Spleen (tissue), 13 donors: ENCODE measurements at regions of chr6 and their contacts with region 1.

Region 1: GRCh38 chr6:117449549-117450439 is 24.1 kb upstream of the ROS1 start:
- DNase-seq: no peak
- H3K4me3 ChIP-seq: no peak overlapping the region
- H3K27ac ChIP-seq: no peak overlapping the region
- H3K4me1 ChIP-seq: peaks cover 0 to 8% (median 3%) of the 10 kb centered on the region in 6 donors
- H3K27me3 ChIP-seq: peaks cover 0 to 44% (median 0%) of the 10 kb centered on the region in 7 donors
- CTCF ChIP-seq: peak; percentile 30 to 81 (median 69)
- POLR2A ChIP-seq: no peak

Region 2: DNA sequence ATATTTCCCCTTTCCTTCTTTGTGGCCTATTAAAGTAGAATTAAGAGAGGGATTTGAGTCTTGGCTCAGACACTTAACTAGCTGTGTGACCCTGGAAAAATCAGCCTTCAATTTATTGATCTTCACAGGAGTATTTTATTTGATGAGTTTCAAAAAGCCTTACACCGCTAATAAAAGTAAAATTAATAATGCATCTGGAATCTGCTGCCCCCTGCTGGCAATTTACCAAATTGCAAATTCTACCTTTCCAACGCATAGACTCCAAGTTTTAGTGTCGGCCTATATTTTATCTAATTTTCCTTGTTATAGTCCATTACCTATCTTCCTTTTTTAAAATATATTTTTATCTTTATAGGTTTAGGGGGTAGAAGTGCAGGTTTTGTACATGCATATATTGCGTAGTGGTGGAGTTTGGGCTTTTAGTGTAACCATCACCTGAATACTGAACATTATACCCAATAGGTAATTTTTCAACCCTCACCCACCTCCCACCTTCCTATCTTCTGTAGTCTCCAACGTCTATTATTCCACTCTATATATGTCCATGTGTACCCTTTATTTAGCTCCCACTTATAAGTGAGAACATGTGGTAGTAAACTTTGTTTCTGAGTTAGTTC is 106.2 kb after region 1 on chr6:
- intact Hi-C with region 1: loop called (anchors 2 kb)
- DNase-seq: no peak
- H3K4me3 ChIP-seq: no peak overlapping the region
- H3K27ac ChIP-seq: no peak overlapping the region
- H3K4me1 ChIP-seq: peaks cover 0 to 10% (median 3%) of the 10 kb centered on the region in 6 donors
- H3K27me3 ChIP-seq: no peaks in the 10 kb centered on the region
- CTCF ChIP-seq: peak; percentile 39 to 90 (median 78)
- POLR2A ChIP-seq: no peak

Region 3: DNA sequence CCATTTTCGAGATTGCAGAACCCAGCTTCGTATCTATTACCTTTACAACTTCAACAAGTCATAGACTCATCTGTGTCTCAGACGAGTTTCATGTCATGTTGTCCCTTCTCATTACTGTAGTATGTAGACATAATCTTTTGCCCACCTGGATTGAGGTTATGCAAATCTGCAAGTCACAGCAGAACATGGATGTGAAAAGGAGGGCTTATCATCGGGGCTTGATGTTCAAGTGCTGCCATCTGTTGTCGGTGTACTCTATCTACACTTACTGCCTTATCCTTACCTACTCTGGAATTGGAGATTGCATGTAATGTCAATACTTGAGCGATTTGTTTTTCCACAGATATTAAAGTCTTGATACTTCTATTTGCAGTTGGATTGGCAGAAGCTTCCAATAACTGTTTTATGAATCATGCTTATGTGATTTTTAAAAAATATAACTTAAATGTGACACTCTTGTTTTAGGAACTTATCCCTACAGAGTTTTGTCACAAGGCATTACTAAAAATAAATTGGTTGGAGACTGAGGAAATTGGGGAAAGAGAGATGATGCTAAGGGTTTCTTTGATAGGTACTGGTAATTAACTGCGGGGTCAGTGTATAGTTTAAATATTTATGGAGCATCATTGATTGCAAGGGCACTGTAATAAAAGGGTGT is 155.5 kb after region 1 on chr6:
- intact Hi-C with region 1: loop called (anchors 5 kb)
- DNase-seq: no peak
- H3K4me3 ChIP-seq: no peak overlapping the region
- H3K27ac ChIP-seq: no peak overlapping the region
- H3K4me1 ChIP-seq: peaks cover 8 to 30% (median 18%) of the 10 kb centered on the region in 6 donors
- H3K27me3 ChIP-seq: peaks cover 0 to 4% (median 0%) of the 10 kb centered on the region in 7 donors
- CTCF ChIP-seq: peak; percentile 8 to 74 (median 61)
- POLR2A ChIP-seq: no peak